Panc1 (cell line): ENCODE measurements at regions of chr6 and their contacts with region 1.

Region 1: DNA sequence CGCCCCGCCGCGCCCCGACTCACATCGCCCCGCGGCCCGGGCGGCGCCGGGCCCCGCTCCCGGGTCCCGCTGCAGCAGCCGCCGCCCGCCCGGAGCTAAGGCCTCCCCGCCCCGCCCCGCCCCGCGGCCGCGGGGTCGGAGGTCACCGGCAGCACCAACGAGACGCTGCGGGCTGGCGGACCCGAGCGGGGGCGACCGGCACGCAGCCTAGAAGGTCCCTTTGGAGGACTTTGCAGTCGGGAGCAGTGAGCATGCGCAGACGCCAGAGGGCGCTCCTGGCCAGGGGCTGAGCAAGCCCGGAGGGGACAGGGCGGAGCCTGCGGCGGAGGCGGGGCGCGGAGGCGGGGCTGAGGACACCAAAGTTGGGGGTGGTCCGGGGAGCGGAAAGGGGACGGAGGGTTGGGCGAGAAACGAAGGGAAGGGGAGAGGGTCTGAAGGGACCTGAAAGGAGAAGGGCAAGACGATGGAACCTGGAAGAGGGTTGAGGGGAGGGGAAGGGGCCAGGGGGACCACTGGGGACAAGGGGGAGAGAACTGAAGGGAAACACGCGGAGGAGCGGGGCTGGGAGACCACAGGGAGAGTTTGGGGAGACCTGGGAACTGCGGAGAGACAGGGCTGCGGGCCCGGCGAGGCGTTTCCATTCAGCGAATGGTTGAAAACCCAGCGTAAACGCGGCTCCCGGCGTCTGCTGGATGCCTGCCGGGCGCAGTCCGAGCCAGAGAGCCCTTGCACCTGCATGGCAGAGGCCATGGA is at the start of gene FRS3:
- DNase-seq: peak; percentile 71
- ATAC-seq: peak; percentile 93
- H3K4me3 ChIP-seq: peak within 1 kb of the TSS; percentile 68 to 78
- H3K27ac ChIP-seq: peak within 1 kb of the TSS; percentile 74; the same call in 1 of the 2 replicates
- H3K4me1 ChIP-seq: peaks cover 5% of the 10 kb centered on the region
- H3K27me3 ChIP-seq: no peaks in the 10 kb centered on the region
- CTCF ChIP-seq: peak; percentile 98
- total RNA-seq, gene FRS3: 3.0 TPM

Region 2: DNA sequence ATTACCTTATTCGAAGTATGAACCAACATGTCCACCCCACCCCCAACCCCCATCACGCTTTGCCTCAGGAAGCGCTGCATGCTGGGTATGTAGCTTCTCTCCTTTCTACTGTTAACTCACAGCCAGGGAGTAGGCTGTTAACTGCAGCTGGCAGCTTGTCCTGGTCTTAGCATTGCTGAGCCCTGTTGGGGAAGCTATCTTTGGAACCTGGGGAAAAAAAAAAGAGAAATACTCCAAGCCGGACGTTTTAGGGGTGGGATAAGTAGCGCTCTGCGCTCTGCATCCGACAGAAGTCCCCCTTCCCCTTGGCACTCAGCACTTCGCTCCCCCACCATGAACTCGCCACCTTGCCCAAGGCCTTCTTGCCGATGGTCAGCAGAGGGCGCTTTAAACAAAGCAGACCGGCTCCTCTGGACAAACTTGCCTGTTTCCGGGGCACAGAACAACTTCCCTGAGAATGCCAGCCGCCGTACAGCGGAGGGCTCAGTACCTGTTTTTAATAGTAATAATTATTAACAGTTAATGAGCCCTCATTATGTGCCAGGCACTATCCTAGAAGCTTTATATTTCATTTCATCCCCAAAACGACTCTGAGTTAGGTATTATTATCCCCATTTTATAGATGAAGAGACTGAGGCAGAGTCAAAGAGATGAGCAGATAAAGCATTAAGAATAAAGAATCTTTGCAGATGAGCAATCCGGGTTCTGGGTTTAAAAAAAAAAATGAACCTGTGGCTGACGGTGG is 176.9 kb before region 1 on chr6:
- CTCF ChIA-PET with region 1: interaction called, 3 read pairs
- POLR2A ChIA-PET with region 1: no interaction called
- in situ Hi-C with region 1: no loop called
- intact Hi-C with region 1: loop called (anchors 5 kb)
- DNase-seq: peak; percentile 70
- ATAC-seq: peak; percentile 83
- H3K4me3 ChIP-seq: peak overlapping the region; percentile 1 to 43; a peak in 2 of 4 replicates
- H3K27ac ChIP-seq: peak overlapping the region; percentile 12; the same call in 1 of the 2 replicates
- H3K4me1 ChIP-seq: peaks cover 10% of the 10 kb centered on the region
- H3K27me3 ChIP-seq: no peaks in the 10 kb centered on the region
- CTCF ChIP-seq: peak; percentile 93